ENCODE measurements at regions of chr15 and their contacts with region 1.

Region 1: DNA sequence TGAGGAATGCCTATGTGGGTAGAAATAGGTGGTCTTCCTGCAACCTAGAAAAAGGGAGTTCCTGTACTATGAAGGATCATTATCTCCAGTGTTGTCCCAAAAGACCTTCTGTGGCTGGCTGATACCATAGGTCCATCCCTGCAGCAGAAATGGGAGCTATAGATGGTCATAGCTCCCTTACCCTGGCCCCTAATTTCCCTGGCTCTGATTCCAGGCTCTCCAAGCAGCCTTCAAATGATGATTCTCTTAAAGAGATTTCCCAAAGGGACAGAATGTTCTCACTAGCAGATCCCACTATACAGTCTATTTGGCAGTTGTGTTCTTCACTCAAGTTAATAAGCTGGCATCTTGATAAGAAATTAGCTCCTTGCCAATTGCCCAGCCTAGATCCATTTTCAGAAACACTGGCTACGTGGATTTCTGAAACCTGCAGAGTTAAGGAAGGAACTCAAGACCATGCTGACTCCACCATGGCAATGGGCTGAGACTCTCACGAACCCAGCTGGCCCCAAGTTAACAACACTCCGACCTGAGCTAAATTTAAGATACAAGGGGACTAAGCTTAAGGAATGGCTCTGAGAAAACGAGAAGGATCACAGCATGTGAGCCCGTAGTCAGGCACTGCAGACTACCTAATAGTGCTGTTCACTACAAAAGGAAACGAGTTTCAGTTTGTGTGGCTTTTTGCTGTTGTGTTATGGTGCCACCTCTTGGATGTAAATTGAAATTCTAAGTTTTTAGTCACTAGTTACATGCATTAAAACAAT is 11.4 kb downstream of the C15orf40 start:
- DNase-seq: peak; percentile 53
- H3K4me3 Mint-ChIP-seq: peak overlapping the region; percentile 40
- H3K27ac Mint-ChIP-seq: no peak overlapping the region
- H3K4me1 Mint-ChIP-seq: peaks cover 6% of the 10 kb centered on the region
- H3K27me3 Mint-ChIP-seq: no peaks in the 10 kb centered on the region

Region 2: DNA sequence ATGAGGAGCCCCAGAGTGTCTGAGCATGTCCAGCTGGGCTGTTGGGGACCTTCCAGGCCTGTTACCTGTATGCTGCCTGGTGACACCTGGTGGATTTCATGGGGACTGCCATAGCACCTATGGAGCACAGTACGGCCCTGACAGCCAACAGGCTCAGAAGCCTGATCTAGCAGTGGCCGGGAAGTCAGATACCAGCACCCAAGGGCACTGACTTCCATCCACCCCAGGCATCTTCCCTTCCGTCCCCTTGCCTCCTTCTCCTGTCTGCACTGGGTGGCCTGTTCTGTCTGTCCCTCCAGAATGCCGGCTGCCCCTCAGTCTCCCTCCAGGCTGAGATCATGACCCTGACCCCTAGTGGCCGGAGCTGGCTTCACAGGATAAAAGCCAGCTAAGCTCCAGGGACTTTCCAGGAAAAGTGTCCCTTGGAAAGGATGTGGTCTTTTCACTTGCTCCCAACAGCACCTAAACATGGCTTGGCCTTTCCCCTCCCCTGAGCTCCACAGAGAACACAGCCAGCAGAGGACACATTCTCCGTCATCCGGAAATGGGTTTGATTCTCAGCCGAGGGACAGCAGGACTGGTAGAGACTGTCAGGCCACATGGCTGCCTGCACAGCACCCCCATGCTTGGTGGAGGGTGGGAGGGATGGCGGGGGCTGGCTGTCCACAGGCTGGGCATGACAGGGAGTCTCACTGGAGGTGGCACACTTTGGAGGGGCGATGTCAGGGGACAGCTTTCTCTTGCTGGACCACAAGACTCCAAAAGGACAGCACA is 469.3 kb before region 1 on chr15:
- CTCF ChIA-PET with region 1: interaction called, 15 read pairs
- intact Hi-C with region 1: no loop called
- DNase-seq: peak; percentile 76
- H3K4me3 Mint-ChIP-seq: peak overlapping the region; percentile 8
- H3K27ac Mint-ChIP-seq: no peak overlapping the region
- H3K4me1 Mint-ChIP-seq: peaks cover 16% of the 10 kb centered on the region
- H3K27me3 Mint-ChIP-seq: no peaks in the 10 kb centered on the region

Region 3: DNA sequence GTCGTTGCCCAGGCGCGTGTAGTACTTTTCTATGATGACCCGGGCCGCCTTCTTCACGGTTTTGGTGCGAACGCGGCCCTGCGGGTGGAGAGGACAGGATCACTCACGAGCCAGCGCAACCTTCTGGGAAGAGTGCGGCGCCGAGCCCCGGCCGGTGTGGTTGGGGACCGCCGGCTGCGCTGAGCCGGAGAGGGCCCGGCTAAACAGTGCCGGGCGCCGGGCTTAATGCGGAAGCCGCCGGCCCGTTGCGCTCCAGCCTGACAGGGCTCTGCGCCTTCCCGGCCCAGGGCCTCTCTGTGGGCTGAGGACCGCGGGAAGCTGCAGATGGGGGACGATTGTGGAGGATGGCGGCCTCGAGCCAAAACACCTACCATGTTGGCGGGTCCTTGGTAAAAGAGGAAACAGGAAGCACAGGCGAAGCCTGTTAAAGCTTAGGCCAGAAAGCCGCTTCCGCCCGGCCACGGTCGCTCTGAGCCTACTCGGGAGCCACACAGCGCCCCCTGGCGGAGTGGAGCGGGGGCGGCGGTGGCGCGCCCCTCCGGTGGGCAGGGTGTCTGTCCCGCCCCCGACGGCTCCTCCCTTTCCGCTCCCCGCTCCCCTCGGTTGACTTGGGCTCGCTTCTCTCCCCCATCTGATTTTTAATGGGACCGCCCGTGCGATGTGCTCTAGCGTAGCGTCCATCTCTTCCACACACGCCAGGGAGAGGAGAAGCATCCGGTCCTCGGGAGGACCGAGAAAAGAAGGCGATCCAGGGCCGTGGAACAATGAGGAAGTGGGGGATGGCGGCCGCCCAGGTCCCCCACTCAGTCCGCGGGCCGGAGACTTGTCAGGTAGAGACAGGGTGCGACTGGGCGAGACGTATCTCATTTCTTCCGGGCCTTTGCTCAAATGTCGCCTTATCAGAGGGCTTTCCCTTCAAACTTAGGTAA is 459.8 kb before region 1 on chr15 and contains the start of gene RPS17:
- CTCF ChIA-PET with region 1: interaction called, 12 read pairs
- intact Hi-C with region 1: no loop called
- DNase-seq: peak; percentile 96
- H3K4me3 Mint-ChIP-seq: peak within 1 kb of the TSS; percentile 85
- H3K27ac Mint-ChIP-seq: peak within 1 kb of the TSS; percentile 96
- H3K4me1 Mint-ChIP-seq: peaks cover 34% of the 10 kb centered on the region
- H3K27me3 Mint-ChIP-seq: no peaks in the 10 kb centered on the region
- total RNA-seq, gene RPS17: 3,025 to 3,069 TPM

Region 4: DNA sequence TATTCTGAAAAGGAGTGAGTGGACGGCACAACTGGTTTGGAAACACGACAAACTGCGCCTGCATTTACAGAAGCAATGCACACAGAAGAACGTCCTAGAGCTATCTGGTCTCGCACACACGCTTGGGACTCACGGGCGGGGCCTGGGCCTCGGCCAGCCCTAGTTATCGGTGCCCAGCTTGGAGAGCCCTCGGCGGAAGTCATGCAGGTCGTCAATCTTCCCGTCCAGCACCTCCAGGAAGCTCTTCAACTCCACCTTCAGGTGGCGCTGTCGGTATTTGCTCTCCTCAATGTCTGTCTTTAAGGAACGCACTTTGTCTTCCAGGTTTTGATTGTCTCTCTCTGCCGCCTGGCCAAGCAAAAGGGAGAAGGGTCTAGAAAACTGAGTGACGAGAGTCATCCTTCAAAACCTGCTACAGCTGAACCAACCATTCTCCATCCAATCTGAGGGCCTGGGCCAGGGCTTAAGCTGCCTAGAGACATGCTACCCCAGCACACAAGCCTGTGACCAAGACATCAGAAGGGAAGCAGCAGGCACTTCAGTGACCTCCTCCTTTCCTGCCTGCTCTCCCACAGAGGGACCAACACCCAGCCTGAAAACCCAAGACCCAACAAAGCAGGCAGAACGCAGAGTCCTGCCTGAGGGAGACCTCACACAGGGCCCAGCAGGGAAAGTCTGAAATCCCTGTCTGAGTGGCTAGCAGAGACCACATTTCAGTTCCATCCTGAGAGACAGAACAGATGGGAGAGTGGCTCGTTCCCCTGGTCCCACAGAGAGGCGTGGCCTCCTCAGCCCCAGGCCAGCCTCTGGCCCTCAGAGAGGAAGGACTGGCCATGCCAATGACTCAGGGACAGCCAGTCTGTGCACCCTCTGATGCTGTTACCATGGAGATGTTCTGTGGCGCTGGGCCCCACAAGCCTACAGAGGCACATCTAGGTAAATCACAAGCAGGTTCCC is 150.3 kb before region 1 on chr15:
- CTCF ChIA-PET with region 1: interaction called, 23 read pairs
- intact Hi-C with region 1: loop called (anchors 2 kb)
- DNase-seq: peak; percentile 75
- H3K4me3 Mint-ChIP-seq: no peak overlapping the region
- H3K27ac Mint-ChIP-seq: no peak overlapping the region
- H3K4me1 Mint-ChIP-seq: peaks cover 17% of the 10 kb centered on the region
- H3K27me3 Mint-ChIP-seq: no peaks in the 10 kb centered on the region